AG04449 (cell line): ENCODE measurements at regions of chr5 and their contacts with region 1.

Region 1: GRCh38 chr5:39217365-39218281 is 1.7 kb downstream of the FYB1 start:
- DNase-seq: no peak
- H3K4me3 ChIP-seq: no peak overlapping the region
- CTCF ChIP-seq: peak; percentile 84

Region 2: DNA sequence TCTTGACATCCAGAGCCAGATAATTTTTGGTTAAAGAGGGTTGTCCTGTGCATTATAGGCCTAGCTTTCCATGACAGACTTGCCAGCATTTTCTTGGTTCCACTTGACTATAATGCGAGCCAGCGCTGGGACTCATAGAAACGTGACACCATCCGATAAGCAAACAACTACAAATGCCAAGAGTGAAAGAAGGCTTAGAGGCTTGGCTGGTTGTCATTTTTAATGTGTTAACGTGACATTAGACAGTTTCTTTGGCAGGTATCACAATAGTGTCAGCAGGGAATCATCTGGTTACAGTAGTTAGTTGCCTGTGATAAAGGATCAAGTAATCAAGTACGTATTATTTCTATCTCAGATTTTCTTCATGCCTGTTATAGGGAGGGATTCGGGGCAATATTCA is 641.2 kb before region 1 on chr5:
- CTCF ChIA-PET with region 1: no interaction called
- POLR2A ChIA-PET with region 1: no interaction called
- DNase-seq: no peak
- H3K4me3 ChIP-seq: no peak overlapping the region
- CTCF ChIP-seq: no peak

Region 3: GRCh38 chr5:39132128-39132447 is 85.5 kb before region 1 on chr5:
- CTCF ChIA-PET with region 1: no interaction called
- POLR2A ChIA-PET with region 1: no interaction called
- DNase-seq: no peak
- H3K4me3 ChIP-seq: no peak overlapping the region
- CTCF ChIP-seq: no peak

Region 4: DNA sequence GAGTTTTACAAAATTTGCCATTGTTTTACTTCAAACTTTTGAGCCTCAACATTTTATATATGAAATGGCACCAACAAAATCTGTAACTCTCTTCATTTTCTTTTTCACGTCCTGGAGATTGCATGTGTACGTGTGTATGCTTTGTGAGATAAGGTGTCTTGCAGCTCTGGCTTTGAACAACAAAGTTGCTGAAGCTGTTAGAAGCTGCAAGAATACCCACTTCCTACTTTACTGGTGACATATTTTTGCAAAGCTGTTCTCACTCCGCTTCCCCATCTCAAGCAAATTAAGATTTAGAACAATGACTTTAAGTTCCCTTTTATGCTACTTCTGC is 40.0 kb before region 1 on chr5:
- CTCF ChIA-PET with region 1: interaction called, 26 read pairs
- POLR2A ChIA-PET with region 1: no interaction called
- DNase-seq: no peak
- H3K4me3 ChIP-seq: no peak overlapping the region
- CTCF ChIP-seq: no peak

Region 5: GRCh38 chr5:39202597-39203274 is 14.9 kb before region 1 on chr5:
- CTCF ChIA-PET with region 1: interaction called, 45 read pairs
- POLR2A ChIA-PET with region 1: no interaction called
- DNase-seq: no peak
- H3K4me3 ChIP-seq: no peak overlapping the region
- CTCF ChIP-seq: no peak

Region 6: DNA sequence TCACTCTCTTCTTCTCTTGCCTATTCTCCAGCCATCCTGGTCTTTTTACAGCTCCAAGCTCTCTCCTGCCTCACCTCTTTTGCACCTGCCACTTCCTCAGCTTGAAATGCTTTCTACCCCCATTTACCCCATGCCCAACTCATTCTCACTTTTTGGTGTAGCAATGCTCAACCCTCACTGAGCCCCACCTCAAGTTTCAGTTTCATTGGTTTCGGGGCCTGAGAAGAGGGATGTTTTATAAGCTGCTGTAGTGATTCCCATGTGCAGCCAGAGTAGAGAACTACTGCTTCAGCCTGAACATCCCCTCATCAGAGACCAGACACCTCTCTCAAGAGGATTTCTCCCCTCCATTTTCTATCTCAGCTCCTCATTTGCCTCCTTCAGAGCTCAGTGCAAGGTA is 46.9 kb after region 1 on chr5:
- CTCF ChIA-PET with region 1: interaction called, 34 read pairs
- POLR2A ChIA-PET with region 1: no interaction called
- DNase-seq: no peak
- H3K4me3 ChIP-seq: no peak overlapping the region
- CTCF ChIP-seq: no peak

Region 7: DNA sequence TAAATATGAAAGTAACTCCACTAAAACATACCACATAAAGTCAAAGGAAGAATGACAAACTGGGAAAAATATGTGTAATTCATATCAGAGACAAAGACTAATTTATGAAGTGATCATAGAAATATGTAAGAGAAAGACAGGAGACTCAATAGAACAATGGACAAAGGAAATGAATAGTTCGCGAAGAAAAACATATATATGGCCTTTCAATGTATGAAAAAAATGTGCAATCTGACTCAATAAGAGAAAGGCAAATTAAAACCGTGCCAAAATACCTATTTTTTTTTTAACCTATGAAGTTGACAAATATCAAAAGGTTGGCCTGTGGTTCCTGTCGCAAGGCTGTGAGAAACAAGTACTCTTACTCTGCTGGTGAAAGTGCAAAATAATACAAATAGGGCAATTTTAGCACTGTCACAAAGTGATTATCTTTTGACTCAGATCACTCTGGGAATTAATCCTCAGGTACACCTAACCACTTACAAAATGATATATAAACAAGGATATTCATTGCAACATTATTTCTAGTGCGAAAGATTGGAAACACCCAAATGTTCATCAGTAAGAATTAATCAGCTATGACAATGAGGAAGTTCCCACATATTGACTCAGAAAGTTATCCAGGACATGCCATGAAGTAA is 143.0 kb after region 1 on chr5:
- CTCF ChIA-PET with region 1: interaction called, 12 read pairs
- POLR2A ChIA-PET with region 1: no interaction called
- DNase-seq: no peak
- H3K4me3 ChIP-seq: no peak overlapping the region
- CTCF ChIP-seq: no peak